Panc1 (cell line): ENCODE measurements at regions of chr15 and their contacts with region 1.

Region 1: GRCh38 chr15:25775317-25775912 is 87.7 kb downstream of the ATP10A start:
- DNase-seq: no peak
- ATAC-seq: no peak
- H3K4me3 ChIP-seq: no peak overlapping the region
- H3K27ac ChIP-seq: no peak overlapping the region
- H3K4me1 ChIP-seq: no peaks in the 10 kb centered on the region
- H3K27me3 ChIP-seq: no peaks in the 10 kb centered on the region
- CTCF ChIP-seq: no peak

Region 2: GRCh38 chr15:25710184-25710583 is 65.2 kb before region 1 on chr15:
- CTCF ChIA-PET with region 1: no interaction called
- POLR2A ChIA-PET with region 1: no interaction called
- in situ Hi-C with region 1: no loop called
- intact Hi-C with region 1: loop called (anchors 10 kb)
- DNase-seq: no peak
- ATAC-seq: peak; percentile 91
- H3K4me3 ChIP-seq: no peak overlapping the region
- H3K27ac ChIP-seq: no peak overlapping the region
- H3K4me1 ChIP-seq: no peaks in the 10 kb centered on the region
- H3K27me3 ChIP-seq: no peaks in the 10 kb centered on the region; the same call in 1 of the 2 replicates
- CTCF ChIP-seq: peak; percentile 89